ENCODE measurements at regions of chrX and their contacts with region 1.

Region 1: GRCh38 chrX:44025555-44025954 is 52.4 kb upstream of the NDP start:
- DNase-seq: no peak
- ATAC-seq: no peak

Region 2: DNA sequence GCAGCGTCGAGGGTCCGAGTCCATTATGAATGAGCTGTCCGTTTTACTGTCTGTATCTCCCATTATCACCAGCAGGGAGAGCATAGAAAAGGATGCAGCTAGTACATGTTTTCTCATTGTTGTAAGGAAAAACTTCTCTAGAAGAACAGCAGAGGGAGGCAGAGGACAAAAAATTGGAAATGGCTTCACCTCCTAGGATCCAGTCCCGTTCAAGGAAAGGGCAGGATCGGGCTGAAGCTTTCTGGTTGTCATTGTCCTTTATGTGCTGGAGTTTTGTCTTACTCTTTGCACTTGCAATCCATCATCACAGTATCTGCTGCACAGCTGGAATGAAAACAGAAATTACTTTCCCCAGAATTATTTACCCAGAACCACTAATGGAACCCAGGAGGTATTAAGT is 67.0 kb before region 1 on chrX:
- intact Hi-C with region 1: loop called (anchors 10 kb)
- DNase-seq: no peak
- ATAC-seq: peak; percentile 76

Region 3: DNA sequence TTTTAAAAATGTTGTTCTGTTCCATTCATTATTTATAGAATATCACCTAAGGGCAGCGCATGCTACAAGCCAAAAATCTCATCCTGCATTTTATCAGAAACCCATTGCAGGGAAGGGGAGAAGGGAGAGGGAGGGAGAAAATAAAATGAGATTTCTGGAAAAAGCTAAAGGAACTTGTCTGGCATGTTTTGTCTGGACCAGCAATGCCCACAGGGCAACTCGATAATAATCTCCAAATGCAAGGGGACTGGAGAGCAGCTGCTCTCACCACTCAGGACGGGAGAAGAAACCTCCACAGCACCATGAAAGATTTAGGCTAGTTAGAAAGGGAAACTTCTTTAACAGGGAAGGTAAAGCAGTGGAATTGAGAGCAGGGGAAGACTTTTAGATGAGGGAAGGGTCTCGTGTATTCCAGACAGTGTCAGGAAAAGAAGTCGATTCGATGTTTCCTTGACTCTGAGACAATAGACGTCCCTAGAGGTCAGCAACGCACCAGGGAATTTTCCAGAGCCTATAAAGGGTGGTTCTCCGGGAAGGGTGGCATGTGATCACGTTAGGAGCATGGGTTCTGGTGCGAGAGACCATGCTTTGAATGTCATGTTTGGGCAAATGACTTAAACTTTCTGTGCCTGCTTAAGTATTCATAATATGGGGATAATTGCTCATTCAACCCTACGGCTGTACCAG is 79.8 kb after region 1 on chrX:
- intact Hi-C with region 1: no loop called
- DNase-seq: no peak
- ATAC-seq: no peak

Measured in left ventricle myocardium superior (tissue), 1 donor.